Activated CD4-positive, alpha-beta T cell treated with anti-CD3 and anti-CD28 coated beads, Interleukin-2, amount 10 ng/mL, durations not matched to agents 24 days and 14 days (primary cell): ENCODE measurements at regions of chr7 and their contacts with region 1.

Region 1: GRCh38 chr7:155598810-155599210 is 45.7 kb upstream of the RBM33 start:
- DNase-seq: peak; percentile 96
- H3K4me3 Mint-ChIP-seq: no peak overlapping the region
- H3K27ac Mint-ChIP-seq: no peak overlapping the region
- H3K4me1 Mint-ChIP-seq: peaks cover 12% of the 10 kb centered on the region
- H3K27me3 Mint-ChIP-seq: peaks cover 38% of the 10 kb centered on the region

Region 2: DNA sequence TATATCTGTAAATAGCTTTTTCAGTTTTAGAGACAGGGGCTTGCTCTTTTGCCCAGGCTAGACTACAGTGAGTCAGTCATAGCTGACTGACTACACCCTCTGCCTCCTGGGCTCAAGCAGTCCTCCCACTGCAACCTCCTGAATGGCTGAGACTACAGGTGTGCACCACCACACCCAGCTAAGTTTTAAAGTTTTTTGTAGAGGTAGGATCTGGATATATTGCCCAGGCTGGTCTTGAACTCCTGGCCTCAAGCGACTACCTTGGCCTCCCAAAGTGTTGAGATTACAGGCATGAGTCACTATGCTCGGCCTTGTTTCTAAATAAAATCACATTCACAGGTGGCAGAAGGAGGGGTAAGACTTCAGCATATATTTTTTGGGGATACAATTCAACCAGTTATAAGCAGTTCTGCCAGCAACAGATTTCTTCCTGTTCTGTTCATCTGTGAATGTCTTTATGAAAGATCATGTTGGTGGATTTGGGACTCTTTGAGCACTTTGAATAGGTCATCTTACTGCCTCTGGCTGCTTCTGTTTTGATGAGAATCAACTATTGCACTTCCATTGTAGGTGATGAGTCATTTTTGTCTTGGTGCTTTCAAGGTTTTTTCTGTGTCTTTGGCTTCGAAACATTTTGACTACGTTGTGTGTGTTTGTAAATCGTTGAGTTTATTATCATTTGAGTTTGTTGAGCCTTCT is 61.4 kb after region 1 on chr7:
- intact Hi-C with region 1: no loop called
- DNase-seq: peak; percentile 48
- H3K4me3 Mint-ChIP-seq: peak overlapping the region; percentile 4
- H3K27ac Mint-ChIP-seq: peak overlapping the region; percentile 69
- H3K4me1 Mint-ChIP-seq: peaks cover 40% of the 10 kb centered on the region
- H3K27me3 Mint-ChIP-seq: no peaks in the 10 kb centered on the region

Region 3: DNA sequence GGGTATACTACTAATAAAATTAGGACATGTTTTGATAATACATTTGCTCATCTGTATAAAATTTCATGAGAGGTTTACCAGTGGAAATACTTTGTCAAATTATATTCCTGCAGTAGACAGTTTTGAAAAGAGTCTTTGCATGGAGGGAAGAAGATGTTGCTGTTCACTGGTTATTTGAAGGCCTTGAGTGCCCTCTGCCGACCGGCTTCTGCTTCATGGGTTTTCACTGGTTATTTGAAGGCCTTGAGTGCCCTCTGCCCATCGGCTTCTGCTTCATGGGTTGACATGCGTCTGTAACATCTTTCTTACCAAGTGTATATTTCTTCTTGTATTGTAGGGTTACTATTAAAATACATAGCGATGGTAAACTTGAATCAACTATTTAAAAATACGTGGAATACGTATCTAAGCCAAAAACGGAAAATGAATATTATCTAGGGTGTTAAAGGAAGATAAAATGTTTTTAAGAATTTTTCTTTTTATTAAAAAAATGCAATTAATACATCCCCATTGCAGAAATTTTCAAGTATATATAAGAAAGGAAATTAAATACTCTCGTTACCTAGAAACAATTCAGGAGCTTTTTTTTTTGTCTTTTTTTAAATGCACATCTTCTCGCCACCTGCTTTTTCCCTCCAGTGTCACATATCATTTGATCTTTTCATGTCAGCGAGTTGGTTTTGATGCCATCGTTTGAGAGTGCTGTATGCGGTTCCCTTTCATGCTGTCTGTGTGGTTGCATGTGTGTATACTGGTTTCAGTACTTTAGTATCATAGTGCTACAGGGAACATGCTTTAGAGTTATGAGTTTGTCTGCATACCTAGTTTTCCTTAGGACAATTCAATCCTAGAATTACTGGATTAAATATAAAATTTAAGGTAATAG is 140.1 kb after region 1 on chr7:
- intact Hi-C with region 1: loop called (anchors 1 kb)
- DNase-seq: peak; percentile 89
- H3K4me3 Mint-ChIP-seq: peak overlapping the region; percentile 52
- H3K27ac Mint-ChIP-seq: peak overlapping the region; percentile 75
- H3K4me1 Mint-ChIP-seq: peaks cover 40% of the 10 kb centered on the region
- H3K27me3 Mint-ChIP-seq: no peaks in the 10 kb centered on the region